Naive thymus-derived CD4-positive, alpha-beta T cell (primary cell): ENCODE measurements at regions of chr6 and their contacts with region 1.

Region 1: DNA sequence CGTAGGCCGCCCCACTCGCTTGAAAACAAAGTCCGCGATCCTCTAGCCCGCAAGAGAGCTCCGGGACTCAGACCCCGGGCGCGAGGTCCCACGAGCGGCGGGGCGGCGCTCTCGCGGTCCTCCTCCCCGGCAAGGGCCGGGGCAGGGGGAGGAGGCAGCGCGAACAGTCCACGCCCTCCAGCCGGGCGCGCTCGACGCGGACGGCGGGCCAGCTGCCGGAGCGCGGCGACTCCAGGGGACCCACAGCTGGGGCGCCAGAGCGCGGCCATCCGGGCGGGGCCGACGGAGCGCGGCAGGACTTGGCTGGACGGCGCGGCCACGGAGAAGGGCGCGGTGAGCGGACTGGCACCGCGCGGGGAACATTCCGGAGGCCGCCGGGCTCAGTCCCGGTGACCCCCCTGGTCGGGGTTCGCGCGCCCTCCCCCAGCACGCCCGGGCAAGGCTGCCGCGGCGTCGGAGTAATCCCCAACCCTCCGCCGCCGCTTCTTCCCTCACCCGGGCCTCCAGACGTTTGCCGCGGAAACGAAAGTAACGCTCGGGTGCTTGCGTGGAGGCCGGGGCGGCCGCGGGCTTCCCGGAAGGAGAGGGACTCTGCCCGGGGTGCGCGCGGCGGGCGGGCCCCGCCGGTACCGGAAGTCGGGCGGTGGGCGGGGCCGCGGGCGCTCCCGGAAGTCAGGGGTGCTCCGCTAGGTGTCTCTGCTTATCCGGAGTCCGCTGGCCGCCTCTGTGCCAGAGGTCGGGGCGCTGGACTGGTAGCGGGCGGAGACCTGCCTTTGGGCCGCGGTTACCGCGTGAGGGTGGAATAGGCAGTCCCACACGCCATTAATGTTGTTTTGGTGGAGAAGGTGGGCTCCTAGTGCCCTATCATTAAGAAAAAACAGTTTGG is at the start of gene RIPK1:
- DNase-seq: peak; percentile 92 to 98 (median 95)
- ATAC-seq: peak; percentile 88
- H3K4me3 ChIP-seq: peak within 1 kb of the TSS; percentile 86
- H3K4me3 Mint-ChIP-seq: peak within 1 kb of the TSS; percentile 91 to 99 (median 96)
- H3K27ac ChIP-seq: peak within 1 kb of the TSS; percentile 99
- H3K27ac Mint-ChIP-seq: peak within 1 kb of the TSS; percentile 92 to 99 (median 98)
- H3K4me1 ChIP-seq: peaks cover 23% of the 10 kb centered on the region in 2 donors
- H3K4me1 Mint-ChIP-seq: peaks cover 41 to 83% (median 69%) of the 10 kb centered on the region in 7 donors
- H3K27me3 ChIP-seq: no peaks in the 10 kb centered on the region
- H3K27me3 Mint-ChIP-seq: no peaks in the 10 kb centered on the region
- total RNA-seq, gene RIPK1: 20.3 to 34.8 (median 32.4) TPM

Region 2: GRCh38 chr6:2841264-2842138 is 227.1 kb before region 1 on chr6 and contains the start of gene SERPINB1:
- CTCF ChIA-PET with region 1: no interaction called
- POLR2A ChIA-PET with region 1: interaction called, 5 read pairs
- intact Hi-C with region 1: loop called in 1 of 2 experiments (anchors 5 kb)
- DNase-seq: peak; percentile 52 to 88 (median 67)
- ATAC-seq: peak; percentile 89
- H3K4me3 ChIP-seq: peak within 1 kb of the TSS; percentile 69
- H3K4me3 Mint-ChIP-seq: peak within 1 kb of the TSS; percentile 86 to 100 (median 92)
- H3K27ac ChIP-seq: peak within 1 kb of the TSS; percentile 85
- H3K27ac Mint-ChIP-seq: peak within 1 kb of the TSS; percentile 86 to 96 (median 95)
- H3K4me1 ChIP-seq: peaks cover 16 to 29% of the 10 kb centered on the region in 2 donors
- H3K4me1 Mint-ChIP-seq: peaks cover 33 to 68% (median 60%) of the 10 kb centered on the region in 7 donors
- H3K27me3 ChIP-seq: no peaks in the 10 kb centered on the region
- H3K27me3 Mint-ChIP-seq: no peaks in the 10 kb centered on the region
- total RNA-seq, gene SERPINB1: 43.8 to 108 (median 62.5) TPM

Region 3: GRCh38 chr6:2979819-2980464 is 88.6 kb before region 1 on chr6:
- CTCF ChIA-PET with region 1: no interaction called
- POLR2A ChIA-PET with region 1: no interaction called
- intact Hi-C with region 1: no loop called
- DNase-seq: no peak
- ATAC-seq: no peak
- H3K4me3 ChIP-seq: no peak overlapping the region
- H3K4me3 Mint-ChIP-seq: no peak overlapping the region
- H3K27ac ChIP-seq: no peak overlapping the region
- H3K27ac Mint-ChIP-seq: no peak overlapping the region
- H3K4me1 ChIP-seq: peaks cover 0 to 7% of the 10 kb centered on the region in 2 donors
- H3K4me1 Mint-ChIP-seq: peaks cover 0 to 19% (median 6%) of the 10 kb centered on the region in 7 donors
- H3K27me3 ChIP-seq: no peaks in the 10 kb centered on the region
- H3K27me3 Mint-ChIP-seq: peaks cover 0 to 70% (median 5%) of the 10 kb centered on the region in 5 donors

Region 4: GRCh38 chr6:2999618-3000557 is 68.7 kb before region 1 on chr6 and contains the start of gene NQO2:
- CTCF ChIA-PET with region 1: interaction called, 4 read pairs
- POLR2A ChIA-PET with region 1: interaction called, 8 read pairs
- intact Hi-C with region 1: loop called (anchors 1 kb)
- DNase-seq: peak; percentile 68 to 92 (median 81)
- ATAC-seq: peak; percentile 91
- H3K4me3 ChIP-seq: peak within 1 kb of the TSS; percentile 95
- H3K4me3 Mint-ChIP-seq: peak within 1 kb of the TSS; percentile 83 to 95 (median 90)
- H3K27ac ChIP-seq: peak within 1 kb of the TSS; percentile 88
- H3K27ac Mint-ChIP-seq: peak within 1 kb of the TSS; percentile 78 to 96 (median 88)
- H3K4me1 ChIP-seq: peaks cover 5 to 18% of the 10 kb centered on the region in 2 donors
- H3K4me1 Mint-ChIP-seq: peaks cover 11 to 35% (median 26%) of the 10 kb centered on the region in 7 donors
- H3K27me3 ChIP-seq: no peaks in the 10 kb centered on the region
- H3K27me3 Mint-ChIP-seq: peaks cover 0 to 5% (median 0%) of the 10 kb centered on the region in 5 donors
- total RNA-seq, gene NQO2: 8.1 to 34.6 (median 22.6) TPM

Region 5: GRCh38 chr6:3118353-3119039 is 49.9 kb after region 1 on chr6 and contains the start of gene BPHL:
- CTCF ChIA-PET with region 1: interaction called, 3 read pairs
- POLR2A ChIA-PET with region 1: interaction called, 4 read pairs
- intact Hi-C with region 1: loop called (anchors 1 kb)
- DNase-seq: peak; percentile 97 to 100 (median 99)
- ATAC-seq: peak; percentile 99
- H3K4me3 ChIP-seq: peak within 1 kb of the TSS; percentile 91
- H3K4me3 Mint-ChIP-seq: peak within 1 kb of the TSS; percentile 77 to 93 (median 90)
- H3K27ac ChIP-seq: peak within 1 kb of the TSS; percentile 97
- H3K27ac Mint-ChIP-seq: peak within 1 kb of the TSS; percentile 82 to 97 (median 95)
- H3K4me1 ChIP-seq: peaks cover 0 to 4% of the 10 kb centered on the region in 2 donors
- H3K4me1 Mint-ChIP-seq: peaks cover 12 to 19% (median 18%) of the 10 kb centered on the region in 7 donors
- H3K27me3 ChIP-seq: no peaks in the 10 kb centered on the region
- H3K27me3 Mint-ChIP-seq: peaks cover 0 to 5% (median 0%) of the 10 kb centered on the region in 5 donors
- total RNA-seq, gene BPHL: 7.9 to 18.0 (median 10.0) TPM

Region 6: GRCh38 chr6:3251462-3252314 is 183.1 kb after region 1 on chr6:
- CTCF ChIA-PET with region 1: interaction called, 3 read pairs
- POLR2A ChIA-PET with region 1: interaction called, 5 read pairs
- intact Hi-C with region 1: loop called in 1 of 2 experiments (anchors 2 kb)
- DNase-seq: peak; percentile 58 to 82 (median 76)
- ATAC-seq: peak; percentile 94
- H3K4me3 ChIP-seq: no peak overlapping the region
- H3K4me3 Mint-ChIP-seq: peak overlapping the region in 5 of 10 donors; percentile 11 to 60 (median 40)
- H3K27ac ChIP-seq: no peak overlapping the region
- H3K27ac Mint-ChIP-seq: peak overlapping the region in 1 of 9 donors; percentile 54
- H3K4me1 ChIP-seq: peaks cover 7 to 8% of the 10 kb centered on the region in 2 donors
- H3K4me1 Mint-ChIP-seq: peaks cover 6 to 12% (median 7%) of the 10 kb centered on the region in 7 donors
- H3K27me3 ChIP-seq: no peaks in the 10 kb centered on the region
- H3K27me3 Mint-ChIP-seq: peaks cover 17 to 51% (median 27%) of the 10 kb centered on the region in 5 donors

Region 7: DNA sequence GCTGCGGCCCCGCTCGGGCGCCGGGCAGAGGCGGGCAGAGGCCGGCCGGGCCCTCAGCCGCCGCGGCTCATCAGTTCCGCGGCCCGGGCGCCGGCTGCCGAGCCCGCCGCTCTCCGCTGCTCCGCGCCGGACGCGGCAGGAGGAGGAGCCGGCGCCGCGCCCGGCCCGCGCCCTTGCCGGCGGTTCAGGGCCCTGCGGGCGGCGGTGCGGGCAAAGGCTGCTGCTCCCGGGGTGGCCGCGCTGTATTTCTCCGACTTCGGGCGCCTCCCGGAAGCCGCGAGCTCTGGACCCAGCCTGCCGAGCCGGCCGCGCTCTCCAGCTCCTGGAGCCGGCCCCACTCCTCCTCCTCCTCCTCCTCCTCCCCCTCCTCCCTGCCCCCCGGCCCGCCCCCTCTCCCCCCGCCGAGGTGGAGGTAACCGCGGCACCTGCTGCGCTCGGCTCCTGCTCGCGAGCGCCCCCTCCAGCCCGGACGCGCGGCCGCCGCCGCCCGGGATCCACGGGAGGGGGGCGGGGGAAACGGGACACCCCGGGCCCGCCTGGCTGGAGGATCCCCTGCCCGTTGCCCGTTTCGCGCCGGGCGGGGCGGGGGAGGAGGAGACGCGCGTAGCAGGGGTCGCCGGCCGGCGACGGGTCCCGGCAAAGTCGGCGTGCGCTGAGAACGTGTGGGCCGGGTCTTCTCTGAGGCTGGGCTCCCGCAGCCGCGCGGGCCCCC is 388.3 kb after region 1 on chr6 and contains the start of gene SLC22A23:
- CTCF ChIA-PET with region 1: no interaction called
- POLR2A ChIA-PET with region 1: no interaction called
- intact Hi-C with region 1: loop called in 1 of 2 experiments (anchors 5 kb)
- DNase-seq: peak; percentile 63 to 84 (median 78)
- ATAC-seq: peak; percentile 81
- H3K4me3 ChIP-seq: peak within 1 kb of the TSS; percentile 66
- H3K4me3 Mint-ChIP-seq: peak within 1 kb of the TSS; percentile 76 to 95 (median 86)
- H3K27ac ChIP-seq: peak within 1 kb of the TSS; percentile 61
- H3K27ac Mint-ChIP-seq: peak within 1 kb of the TSS; percentile 32 to 91 (median 73)
- H3K4me1 ChIP-seq: peaks cover 8 to 24% of the 10 kb centered on the region in 2 donors
- H3K4me1 Mint-ChIP-seq: peaks cover 4 to 17% (median 12%) of the 10 kb centered on the region in 7 donors
- H3K27me3 ChIP-seq: peaks cover 0 to 4% of the 10 kb centered on the region in 2 donors
- H3K27me3 Mint-ChIP-seq: peaks cover 0 to 47% (median 8%) of the 10 kb centered on the region in 5 donors
- total RNA-seq, gene SLC22A23: 1.1 to 23.8 (median 20.0) TPM